ENCODE measurements at regions of chr21 and their contacts with region 1.

Region 1: DNA sequence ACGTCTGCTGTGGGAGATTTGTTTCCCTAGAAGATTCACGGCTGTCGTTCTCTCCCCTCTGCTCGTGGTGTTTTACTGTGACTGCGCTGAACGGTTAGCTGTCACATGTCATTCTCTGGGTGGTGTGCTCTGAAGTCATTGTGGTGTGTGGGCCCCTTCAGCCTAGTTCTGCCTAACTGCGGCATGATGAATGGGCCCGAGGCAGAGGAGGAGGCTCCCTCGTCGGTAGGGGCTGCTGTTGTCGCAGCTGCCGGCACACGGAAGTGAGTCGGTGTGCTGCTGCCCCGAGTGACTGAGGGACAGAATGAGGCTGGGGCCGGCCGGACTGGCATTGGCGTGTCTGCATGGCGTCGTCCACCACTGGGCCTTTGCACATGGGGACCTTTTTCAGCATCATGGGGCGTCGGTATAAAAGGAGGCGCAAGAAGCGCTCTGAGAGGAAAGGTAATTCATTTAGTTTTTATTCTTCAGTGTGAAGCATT is 77.9 kb downstream of the ADARB1 start:
- DNase-seq: peak; percentile 80
- H3K4me3 Mint-ChIP-seq: peak overlapping the region; percentile 29
- H3K27ac Mint-ChIP-seq: peak overlapping the region; percentile 46
- H3K4me1 Mint-ChIP-seq: peaks cover 43% of the 10 kb centered on the region
- H3K27me3 Mint-ChIP-seq: no peaks in the 10 kb centered on the region

Region 2: DNA sequence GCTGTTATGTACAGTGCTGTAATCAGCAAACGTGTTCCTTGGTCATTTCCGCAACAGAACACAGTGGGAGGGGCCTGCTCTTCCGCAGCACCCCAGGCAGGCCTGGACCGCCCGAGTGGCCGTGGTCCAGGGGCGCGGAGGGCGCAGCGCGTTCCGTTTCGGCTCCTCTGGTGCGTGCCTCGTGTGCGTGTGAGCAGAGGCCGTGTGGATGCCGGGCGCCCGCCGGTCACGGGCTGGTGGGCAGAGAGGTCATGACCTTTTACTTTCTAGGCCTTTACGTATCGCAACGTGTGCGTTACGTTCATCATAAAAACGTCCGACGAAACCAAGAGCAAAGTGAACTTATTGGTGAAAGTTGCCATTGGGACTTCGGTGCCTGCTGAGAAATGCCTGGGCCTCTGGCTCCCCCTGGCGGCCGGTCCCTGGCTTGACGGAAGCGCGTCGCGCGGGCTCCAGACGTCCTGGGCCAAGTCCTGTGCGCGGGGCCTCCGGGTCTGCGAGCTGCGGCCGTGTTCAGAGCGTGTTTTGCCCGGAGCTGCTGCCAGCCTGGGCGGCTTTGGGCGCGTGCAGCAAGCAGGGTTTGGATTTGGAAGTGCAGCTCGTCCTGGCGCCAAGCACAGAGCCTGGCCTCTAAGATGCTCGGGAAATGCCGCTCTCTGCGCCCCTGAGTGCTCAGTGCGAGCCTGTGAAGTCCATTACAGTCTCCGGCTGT is 287.0 kb after region 1 on chr21:
- CTCF ChIA-PET with region 1: interaction called, 10 read pairs
- DNase-seq: peak; percentile 90
- H3K4me3 Mint-ChIP-seq: peak overlapping the region; percentile 43
- H3K27ac Mint-ChIP-seq: peak overlapping the region; percentile 37
- H3K4me1 Mint-ChIP-seq: peaks cover 12% of the 10 kb centered on the region
- H3K27me3 Mint-ChIP-seq: peaks cover 18% of the 10 kb centered on the region